ENCODE measurements at regions of chr3 and their contacts with region 1.

Region 1: DNA sequence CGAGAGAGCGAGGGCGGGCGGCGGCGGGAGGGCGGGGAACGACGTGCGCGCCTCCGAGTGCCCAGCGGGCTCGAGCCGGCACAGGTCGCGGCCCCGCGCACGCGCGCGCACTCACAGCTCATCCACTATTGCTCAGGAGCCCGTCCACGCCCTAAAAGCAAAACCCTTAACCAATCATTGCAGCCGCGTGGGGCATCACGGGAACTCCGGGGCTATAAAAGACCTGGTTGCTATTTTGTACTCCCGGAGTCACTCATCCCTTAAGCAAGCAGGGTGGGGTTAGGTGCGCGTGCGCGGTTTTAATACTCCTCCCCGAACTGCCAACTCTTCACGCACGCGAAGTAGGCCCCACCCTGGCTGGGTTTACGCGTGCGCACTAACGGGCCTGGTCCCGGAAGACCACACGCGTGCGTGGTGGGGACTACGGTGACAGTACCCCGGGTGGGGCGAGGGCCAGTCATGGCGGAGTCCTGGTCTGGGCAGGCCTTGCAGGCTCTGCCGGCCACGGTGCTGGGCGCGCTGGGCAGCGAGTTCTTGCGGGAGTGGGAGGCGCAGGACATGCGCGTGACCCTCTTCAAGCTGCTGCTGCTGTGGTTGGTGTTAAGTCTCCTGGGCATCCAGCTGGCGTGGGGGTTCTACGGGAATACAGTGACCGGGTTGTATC is at the starts of genes RHOA and TCTA:
- DNase-seq: peak; percentile 100
- H3K4me3 ChIP-seq: peak within 1 kb of the TSS; percentile 69 to 100 (median 99)
- H3K27ac ChIP-seq: peak within 1 kb of the TSS; percentile 79
- H3K4me1 ChIP-seq: peaks cover 35% of the 10 kb centered on the region
- H3K27me3 ChIP-seq: no peaks in the 10 kb centered on the region
- CTCF ChIP-seq: no peak
- POLR2A ChIP-seq: peak; percentile 99
- total RNA-seq, gene RHOA: 571 and 580 TPM in 2 replicates
- total RNA-seq, gene TCTA: 18.6 and 21.9 TPM in 2 replicates

Region 2: DNA sequence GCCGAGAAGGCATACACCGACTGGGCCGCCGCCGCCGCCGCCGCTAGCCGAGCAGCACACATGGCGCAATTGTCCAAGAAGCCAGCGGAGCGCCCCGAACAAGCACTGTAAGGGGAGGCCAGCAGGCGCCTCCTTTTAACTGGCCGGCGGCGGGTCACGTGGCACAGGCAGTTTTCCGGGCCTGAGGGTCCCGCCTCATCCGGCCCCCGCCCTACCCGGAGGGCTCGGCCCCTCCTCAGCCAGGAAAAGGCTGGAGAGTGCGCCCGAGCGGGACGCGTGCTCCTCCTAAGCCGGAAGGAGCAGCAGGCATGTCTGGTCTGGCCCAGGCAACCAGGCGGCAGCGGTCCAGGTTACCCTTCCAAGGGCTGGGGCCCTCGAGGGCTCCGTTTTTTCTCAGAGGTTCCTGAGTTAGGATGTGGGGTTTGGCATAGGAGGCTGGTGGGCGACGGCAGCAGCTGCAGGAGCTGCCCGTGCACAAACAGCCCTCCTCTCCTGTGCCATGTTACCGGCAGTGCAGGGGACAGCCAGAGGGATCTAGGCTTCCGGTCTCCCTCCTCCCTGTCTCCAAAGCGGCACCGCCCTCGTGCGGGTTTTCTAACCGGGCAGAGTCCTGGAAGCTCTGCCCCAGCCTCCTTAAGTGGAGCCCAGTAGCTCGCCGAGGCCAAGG is 53.8 kb before region 1 on chr3 and contains the start of gene GPX1:
- CTCF ChIA-PET with region 1: interaction called, 5 read pairs
- POLR2A ChIA-PET with region 1: interaction called, 6 read pairs
- dilution Hi-C with region 1: no loop called
- intact Hi-C with region 1: loop called (anchors 1 kb)
- DNase-seq: peak; percentile 94
- H3K4me3 ChIP-seq: peak within 1 kb of the TSS; percentile 25 to 76 (median 71)
- H3K27ac ChIP-seq: peak within 1 kb of the TSS; percentile 66
- H3K4me1 ChIP-seq: peaks cover 31% of the 10 kb centered on the region
- H3K27me3 ChIP-seq: no peaks in the 10 kb centered on the region
- CTCF ChIP-seq: no peak
- POLR2A ChIP-seq: peak; percentile 98
- total RNA-seq, gene GPX1: 427 and 461 TPM in 2 replicates

Region 3: DNA sequence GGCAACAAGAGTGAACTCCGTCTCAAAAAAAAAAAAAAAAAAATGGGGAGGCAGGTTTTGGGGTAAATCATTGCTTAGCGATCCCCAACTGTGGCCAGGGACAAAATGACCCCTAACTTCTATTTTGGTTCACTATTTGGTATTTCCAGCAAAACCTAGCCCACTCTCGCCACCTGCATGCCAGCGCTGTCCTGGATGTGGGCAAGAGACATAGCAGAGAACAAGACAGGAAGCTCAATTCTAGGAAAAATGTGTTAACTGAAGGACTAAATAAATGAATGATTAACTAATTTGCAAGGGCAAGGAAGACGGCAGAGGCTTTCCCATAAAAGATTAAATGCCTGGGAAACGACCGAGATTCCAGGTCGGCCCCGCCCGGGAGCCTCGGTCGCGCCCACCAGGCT is 16.6 kb after region 1 on chr3:
- CTCF ChIA-PET with region 1: interaction called, 5 read pairs
- POLR2A ChIA-PET with region 1: interaction called, 10 read pairs
- dilution Hi-C with region 1: no loop called
- intact Hi-C with region 1: loop called (anchors 1 kb)
- DNase-seq: no peak
- H3K4me3 ChIP-seq: peak overlapping the region in 2 of 3 experiments; percentile 75 to 92
- H3K27ac ChIP-seq: no peak overlapping the region
- H3K4me1 ChIP-seq: peaks cover 3% of the 10 kb centered on the region
- H3K27me3 ChIP-seq: no peaks in the 10 kb centered on the region
- CTCF ChIP-seq: no peak
- POLR2A ChIP-seq: no peak